ENCODE measurements at regions of chr9 and their contacts with region 1.

Region 1: DNA sequence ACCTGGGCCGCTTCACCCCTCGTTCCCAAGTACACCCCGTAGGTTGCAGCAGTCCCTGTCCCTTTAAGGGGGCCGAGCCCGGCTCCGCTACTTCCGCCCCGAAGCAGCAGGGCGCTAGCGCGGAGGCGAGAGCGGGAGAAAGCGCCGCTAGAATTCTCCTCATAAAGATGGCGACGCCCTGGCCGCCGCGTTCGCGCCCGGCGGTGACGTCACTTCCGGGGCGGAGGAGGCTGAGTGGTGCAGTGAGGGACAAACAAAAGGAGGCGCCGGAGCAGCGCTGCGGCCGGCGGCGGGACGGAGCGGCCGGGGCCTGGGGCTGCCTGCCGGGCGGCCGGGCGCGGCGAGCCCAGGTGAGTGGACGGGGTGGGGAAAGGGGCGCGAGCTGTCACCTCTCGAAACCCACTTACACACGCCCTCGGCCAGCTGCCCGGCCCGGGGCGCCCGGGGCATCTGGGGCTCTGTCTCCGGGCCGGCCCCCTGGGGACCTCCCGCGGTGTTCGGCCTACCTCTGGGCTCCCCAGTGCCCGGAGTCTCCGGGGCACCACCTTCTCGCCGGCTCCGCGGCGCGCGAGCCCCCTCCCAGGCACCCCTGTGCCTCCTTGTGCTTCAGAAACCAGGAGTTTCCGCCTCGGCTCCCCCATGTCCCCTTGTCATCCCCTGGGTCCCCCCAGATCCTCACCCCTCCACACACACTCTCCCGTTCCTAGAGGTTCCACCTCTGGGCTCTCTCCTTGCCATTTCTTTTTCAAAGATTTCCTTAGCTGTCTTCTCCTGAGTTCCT is at the starts of genes KYAT1 and LRRC8A:
- DNase-seq: peak; percentile 98
- ATAC-seq: peak; percentile 90
- H3K4me3 Mint-ChIP-seq: peak within 1 kb of the TSS; percentile 94
- H3K27ac Mint-ChIP-seq: peak within 1 kb of the TSS; percentile 84
- H3K4me1 Mint-ChIP-seq: peaks cover 34% of the 10 kb centered on the region
- H3K27me3 Mint-ChIP-seq: no peaks in the 10 kb centered on the region
- CTCF ChIP-seq: no peak
- total RNA-seq, gene KYAT1: 2.0 and 4.3 TPM in 2 replicates
- total RNA-seq, gene LRRC8A: 9.0 and 10.4 TPM in 2 replicates

Region 2: GRCh38 chr9:128552153-128552743 is 329.8 kb before region 1 on chr9 and contains the start of gene SPTAN1:
- CTCF ChIA-PET with region 1: no interaction called
- POLR2A ChIA-PET with region 1: no interaction called
- intact Hi-C with region 1: loop called (anchors 2 kb)
- DNase-seq: peak; percentile 94
- ATAC-seq: peak; percentile 92
- H3K4me3 Mint-ChIP-seq: peak within 1 kb of the TSS; percentile 90
- H3K27ac Mint-ChIP-seq: peak within 1 kb of the TSS; percentile 90
- H3K4me1 Mint-ChIP-seq: peaks cover 22% of the 10 kb centered on the region
- H3K27me3 Mint-ChIP-seq: no peaks in the 10 kb centered on the region
- CTCF ChIP-seq: no peak
- total RNA-seq, gene SPTAN1: 208 and 237 TPM in 2 replicates

Region 3: GRCh38 chr9:128771745-128772519 is 110.2 kb before region 1 on chr9 and contains the start of gene ZER1:
- CTCF ChIA-PET with region 1: no interaction called
- POLR2A ChIA-PET with region 1: no interaction called
- intact Hi-C with region 1: loop called (anchors 1 kb)
- DNase-seq: peak; percentile 96
- ATAC-seq: peak; percentile 93
- H3K4me3 Mint-ChIP-seq: peak within 1 kb of the TSS; percentile 92
- H3K27ac Mint-ChIP-seq: peak within 1 kb of the TSS; percentile 89
- H3K4me1 Mint-ChIP-seq: peaks cover 24% of the 10 kb centered on the region
- H3K27me3 Mint-ChIP-seq: no peaks in the 10 kb centered on the region
- CTCF ChIP-seq: no peak
- total RNA-seq, gene ZER1: 24.0 and 26.0 TPM in 2 replicates

Region 4: DNA sequence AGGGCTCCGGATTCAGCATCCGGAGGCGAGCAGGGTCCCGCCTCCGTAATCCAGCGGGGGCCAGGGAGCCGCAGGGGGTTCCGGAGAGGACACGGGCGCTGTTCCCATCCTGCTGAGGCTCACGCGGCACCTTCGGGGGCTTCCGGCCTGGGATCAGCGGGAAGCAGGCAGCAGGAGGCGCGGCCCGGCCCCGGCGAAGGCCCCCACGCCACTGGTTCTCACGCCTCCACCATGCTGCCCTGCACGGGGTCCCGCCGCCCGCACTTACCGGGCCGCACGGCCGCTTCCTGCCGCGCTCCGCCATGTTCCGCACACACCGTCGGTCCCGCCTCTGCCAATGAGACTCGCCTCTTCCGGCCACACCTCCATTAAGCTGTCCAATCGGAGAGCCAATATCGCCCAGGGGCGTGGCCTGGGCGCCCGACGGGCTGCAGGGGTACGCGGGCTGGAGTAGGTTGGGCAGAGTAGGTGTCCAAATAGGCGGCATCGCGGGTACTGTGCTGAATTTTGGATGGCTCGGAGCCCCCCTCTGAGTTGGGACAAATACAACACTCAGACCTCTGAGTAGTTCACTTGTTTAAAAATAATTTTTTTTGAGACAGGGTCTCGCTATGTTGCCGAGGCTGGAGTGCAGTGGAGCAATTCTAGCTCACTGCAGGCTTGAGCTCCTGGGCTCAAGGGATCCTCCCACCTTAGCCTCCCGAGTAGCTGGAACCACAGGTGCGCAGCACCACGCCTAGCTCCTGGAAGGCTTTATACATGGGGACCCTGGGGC is 52.4 kb before region 1 on chr9 and contains the start of gene SPOUT1:
- CTCF ChIA-PET with region 1: no interaction called
- POLR2A ChIA-PET with region 1: interaction called, 6 read pairs
- intact Hi-C with region 1: loop called (anchors 1 kb)
- DNase-seq: peak; percentile 92
- ATAC-seq: peak; percentile 99
- H3K4me3 Mint-ChIP-seq: peak within 1 kb of the TSS; percentile 94
- H3K27ac Mint-ChIP-seq: peak within 1 kb of the TSS; percentile 90
- H3K4me1 Mint-ChIP-seq: peaks cover 22% of the 10 kb centered on the region
- H3K27me3 Mint-ChIP-seq: no peaks in the 10 kb centered on the region
- CTCF ChIP-seq: no peak
- total RNA-seq, gene SPOUT1: 78.9 and 79.1 TPM in 2 replicates

Region 5: DNA sequence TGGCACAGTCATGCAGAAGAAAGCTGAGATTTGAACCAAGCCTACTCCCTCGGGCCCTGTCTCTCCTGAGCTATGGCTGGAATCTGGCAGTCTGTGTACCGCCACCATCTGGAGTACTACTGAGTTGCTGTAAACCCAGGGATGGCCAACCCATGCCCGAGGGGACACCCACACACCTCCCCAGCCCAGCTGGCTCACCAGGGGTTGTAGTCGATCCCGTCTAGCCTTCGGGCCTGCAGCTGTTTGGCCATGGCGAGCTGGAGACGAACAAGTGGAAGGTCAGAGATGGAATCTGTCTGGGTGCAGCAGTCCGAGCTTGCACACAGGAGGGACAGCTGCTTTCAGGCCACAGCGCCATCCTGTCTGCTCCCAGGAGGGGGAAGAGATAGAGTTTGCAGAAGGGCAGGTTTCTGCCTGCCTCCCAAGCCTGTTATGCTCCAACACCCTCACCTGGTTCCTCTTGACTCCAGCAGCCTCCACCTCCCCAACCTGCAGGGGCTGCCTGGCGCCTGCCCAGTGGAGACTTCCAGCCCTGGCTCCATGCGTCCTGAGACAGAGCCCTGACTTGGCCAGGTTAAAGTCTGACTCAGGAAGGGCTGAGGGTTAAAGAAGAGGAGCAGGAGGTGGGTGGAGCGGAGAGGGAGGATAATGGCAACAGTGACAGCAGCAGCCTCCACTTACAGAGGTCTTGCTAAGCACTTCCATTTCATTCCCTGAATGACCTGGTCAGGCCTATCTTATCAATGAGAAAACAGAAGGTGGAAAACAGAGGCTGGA is 36.7 kb before region 1 on chr9:
- CTCF ChIA-PET with region 1: no interaction called
- POLR2A ChIA-PET with region 1: no interaction called
- intact Hi-C with region 1: no loop called
- DNase-seq: no peak
- ATAC-seq: no peak
- H3K4me3 Mint-ChIP-seq: no peak overlapping the region
- H3K27ac Mint-ChIP-seq: no peak overlapping the region
- H3K4me1 Mint-ChIP-seq: no peaks in the 10 kb centered on the region
- H3K27me3 Mint-ChIP-seq: no peaks in the 10 kb centered on the region
- CTCF ChIP-seq: no peak

Region 6: GRCh38 chr9:128927731-128928411 is 45.8 kb after region 1 on chr9:
- CTCF ChIA-PET with region 1: interaction called, 9 read pairs
- POLR2A ChIA-PET with region 1: interaction called, 3 read pairs
- intact Hi-C with region 1: loop called (anchors 5 kb)
- DNase-seq: peak; percentile 30
- ATAC-seq: peak; percentile 86
- H3K4me3 Mint-ChIP-seq: no peak overlapping the region
- H3K27ac Mint-ChIP-seq: no peak overlapping the region
- H3K4me1 Mint-ChIP-seq: peaks cover 5% of the 10 kb centered on the region
- H3K27me3 Mint-ChIP-seq: no peaks in the 10 kb centered on the region
- CTCF ChIP-seq: peak; percentile 90

Region 7: GRCh38 chr9:129080602-129081387 is 198.7 kb after region 1 on chr9 and contains the start of gene DOLPP1:
- CTCF ChIA-PET with region 1: no interaction called
- POLR2A ChIA-PET with region 1: no interaction called
- intact Hi-C with region 1: no loop called
- DNase-seq: peak; percentile 97
- ATAC-seq: peak; percentile 95
- H3K4me3 Mint-ChIP-seq: peak within 1 kb of the TSS; percentile 87
- H3K27ac Mint-ChIP-seq: peak within 1 kb of the TSS; percentile 76
- H3K4me1 Mint-ChIP-seq: peaks cover 29% of the 10 kb centered on the region
- H3K27me3 Mint-ChIP-seq: no peaks in the 10 kb centered on the region
- CTCF ChIP-seq: no peak
- total RNA-seq, gene DOLPP1: 10.9 and 11.3 TPM in 2 replicates

Measured in activated B cell treated with CpG ODN at 0.5 μM for 24 hours (primary cell).